ENCODE measurements at regions of chr3 and their contacts with region 1.

Region 1: DNA sequence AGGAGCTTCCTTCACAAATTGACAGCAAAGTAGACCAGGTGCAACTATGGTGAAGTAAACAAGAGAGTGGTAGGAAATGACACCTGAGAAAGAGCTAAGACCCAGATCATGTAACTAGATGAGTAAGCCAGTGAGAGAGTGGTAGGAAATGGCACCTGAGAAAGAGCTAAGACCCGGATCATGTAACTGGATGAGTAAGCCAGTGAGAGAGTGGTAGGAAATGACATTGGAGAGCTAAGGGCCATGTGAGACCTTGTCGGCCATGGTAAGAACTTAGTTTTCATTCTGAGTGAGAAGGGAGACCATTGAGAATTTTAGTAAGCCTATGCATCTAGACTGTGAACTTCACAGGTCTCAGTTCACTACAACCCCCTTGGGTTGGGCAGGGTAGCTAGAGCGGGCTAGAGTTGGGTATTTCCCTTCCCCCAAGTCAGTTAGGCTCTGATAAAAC is 5.4 kb upstream of the SENP7 start:
- DNase-seq: peak; percentile 84
- H3K4me3 Mint-ChIP-seq: peak overlapping the region; percentile 46
- H3K27ac Mint-ChIP-seq: peak overlapping the region; percentile 92
- H3K4me1 Mint-ChIP-seq: peaks cover 41% of the 10 kb centered on the region
- H3K27me3 Mint-ChIP-seq: no peaks in the 10 kb centered on the region

Region 2: GRCh38 chr3:101531473-101532086 is 13.1 kb after region 1 on chr3:
- intact Hi-C with region 1: loop called (anchors 1 kb)
- DNase-seq: peak; percentile 65
- H3K4me3 Mint-ChIP-seq: peak overlapping the region; percentile 21
- H3K27ac Mint-ChIP-seq: peak overlapping the region; percentile 56
- H3K4me1 Mint-ChIP-seq: peaks cover 26% of the 10 kb centered on the region
- H3K27me3 Mint-ChIP-seq: no peaks in the 10 kb centered on the region

Region 3: GRCh38 chr3:101561630-101562328 is 43.3 kb after region 1 on chr3 and contains the start of gene TRMT10C:
- intact Hi-C with region 1: loop called (anchors 1 kb)
- DNase-seq: peak; percentile 98
- H3K4me3 Mint-ChIP-seq: peak within 1 kb of the TSS; percentile 98
- H3K27ac Mint-ChIP-seq: peak within 1 kb of the TSS; percentile 99
- H3K4me1 Mint-ChIP-seq: peaks cover 30% of the 10 kb centered on the region
- H3K27me3 Mint-ChIP-seq: peaks cover 2% of the 10 kb centered on the region
- total RNA-seq, gene TRMT10C: 58.3 and 59.9 TPM in 2 replicates

Region 4: DNA sequence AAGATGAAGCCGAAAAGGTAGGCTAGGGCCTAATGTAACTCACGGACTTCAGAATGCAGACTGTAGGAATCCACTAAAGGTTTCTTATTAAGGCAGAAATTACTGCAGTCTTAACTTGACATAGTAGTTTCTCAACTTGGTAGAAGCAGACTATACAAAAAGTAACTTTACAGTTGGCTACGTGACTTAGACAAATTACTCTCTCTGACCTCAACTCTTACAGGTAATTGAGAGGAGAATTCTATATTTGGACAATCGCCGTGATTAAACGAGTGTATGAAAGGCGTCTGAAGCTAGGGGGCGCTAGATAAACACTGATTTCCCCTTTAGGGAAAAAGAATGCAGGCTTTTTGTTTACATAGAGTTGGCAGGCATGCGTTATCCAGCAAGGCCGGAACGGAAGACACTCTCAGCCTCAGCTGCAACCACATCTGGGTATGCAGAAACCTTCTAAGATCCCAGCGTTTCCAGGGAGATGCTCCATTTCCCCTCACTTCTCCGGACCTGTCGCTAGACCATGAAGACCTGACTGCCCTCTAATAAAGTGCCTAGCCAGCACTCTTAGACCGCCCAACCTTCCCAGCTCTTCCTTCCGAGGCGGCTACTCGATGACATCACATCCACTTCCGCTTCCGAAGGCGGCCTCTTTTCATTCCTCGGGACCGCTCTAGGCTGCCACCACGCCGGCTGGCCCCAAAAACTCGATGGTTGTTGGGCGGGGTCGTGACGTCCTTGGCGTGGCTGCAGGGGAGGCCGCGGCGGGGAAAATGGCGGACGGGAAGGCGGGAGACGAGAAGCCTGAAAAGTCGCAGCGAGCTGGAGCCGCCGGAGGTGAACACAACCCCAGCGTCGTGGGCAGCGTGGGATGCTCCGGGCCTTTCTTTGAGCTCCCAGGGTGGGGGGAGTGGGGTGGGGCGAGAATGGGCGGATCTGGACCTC is 55.3 kb after region 1 on chr3 and contains the start of gene PCNP:
- intact Hi-C with region 1: loop called (anchors 1 kb)
- DNase-seq: peak; percentile 100
- H3K4me3 Mint-ChIP-seq: peak within 1 kb of the TSS; percentile 94
- H3K27ac Mint-ChIP-seq: peak within 1 kb of the TSS; percentile 95
- H3K4me1 Mint-ChIP-seq: peaks cover 46% of the 10 kb centered on the region
- H3K27me3 Mint-ChIP-seq: no peaks in the 10 kb centered on the region
- total RNA-seq, gene PCNP: 190 and 205 TPM in 2 replicates

Region 5: DNA sequence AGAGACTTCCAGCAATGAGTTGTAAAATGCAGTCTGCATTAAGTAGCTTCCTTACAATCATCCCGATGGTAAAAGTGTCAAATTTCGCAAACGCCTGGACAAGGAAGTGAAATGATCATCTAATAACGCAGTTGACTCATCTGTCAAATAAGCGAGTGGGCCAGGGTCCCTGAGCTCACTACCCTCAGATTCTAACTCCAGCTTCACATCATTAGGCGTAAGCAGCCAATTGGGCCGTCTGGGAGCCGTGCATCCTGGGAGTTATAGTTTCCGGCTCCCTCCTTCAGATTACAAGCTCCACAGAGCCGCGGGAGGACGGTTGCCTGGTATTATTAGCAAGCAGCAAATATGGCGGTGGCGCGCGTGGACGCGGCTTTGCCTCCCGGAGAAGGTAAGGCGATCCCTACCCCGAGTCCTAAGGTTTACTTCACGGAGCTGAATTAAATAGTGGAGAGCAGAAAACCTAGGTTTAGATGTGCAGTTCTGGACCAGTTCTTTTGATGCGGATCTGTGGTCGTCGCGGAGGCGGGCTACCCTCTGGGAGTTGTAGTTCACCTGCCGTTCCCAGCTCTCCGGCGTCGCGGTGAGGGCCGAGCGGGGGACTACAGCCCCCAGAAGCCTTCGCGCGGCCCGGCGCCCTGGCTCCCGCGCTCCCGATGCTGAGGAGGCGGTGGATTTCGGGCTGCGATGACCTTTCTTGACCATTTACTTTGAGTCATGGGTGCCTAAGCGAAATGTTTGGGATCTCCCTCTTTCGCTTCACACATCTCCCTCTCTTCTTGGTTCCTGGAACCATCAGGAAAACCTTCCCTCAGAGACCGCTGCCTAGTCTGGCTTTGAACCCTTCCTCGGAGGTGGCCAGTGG is 206.1 kb after region 1 on chr3 and contains the start of gene CEP97:
- intact Hi-C with region 1: loop called (anchors 5 kb)
- DNase-seq: peak; percentile 96
- H3K4me3 Mint-ChIP-seq: peak within 1 kb of the TSS; percentile 95
- H3K27ac Mint-ChIP-seq: peak within 1 kb of the TSS; percentile 97
- H3K4me1 Mint-ChIP-seq: peaks cover 35% of the 10 kb centered on the region
- H3K27me3 Mint-ChIP-seq: no peaks in the 10 kb centered on the region
- total RNA-seq, gene CEP97: 20.3 and 22.8 TPM in 2 replicates

Measured in activated CD4-positive, alpha-beta T cell treated with anti-CD3 and anti-CD28 coated beads, Interleukin-2, amount 10 ng/mL, durations not matched to agents 24 days and 14 days (primary cell).